Heart right ventricle (tissue), 16 donors: ENCODE measurements at regions of chr10 and their contacts with region 1.

Region 1: DNA sequence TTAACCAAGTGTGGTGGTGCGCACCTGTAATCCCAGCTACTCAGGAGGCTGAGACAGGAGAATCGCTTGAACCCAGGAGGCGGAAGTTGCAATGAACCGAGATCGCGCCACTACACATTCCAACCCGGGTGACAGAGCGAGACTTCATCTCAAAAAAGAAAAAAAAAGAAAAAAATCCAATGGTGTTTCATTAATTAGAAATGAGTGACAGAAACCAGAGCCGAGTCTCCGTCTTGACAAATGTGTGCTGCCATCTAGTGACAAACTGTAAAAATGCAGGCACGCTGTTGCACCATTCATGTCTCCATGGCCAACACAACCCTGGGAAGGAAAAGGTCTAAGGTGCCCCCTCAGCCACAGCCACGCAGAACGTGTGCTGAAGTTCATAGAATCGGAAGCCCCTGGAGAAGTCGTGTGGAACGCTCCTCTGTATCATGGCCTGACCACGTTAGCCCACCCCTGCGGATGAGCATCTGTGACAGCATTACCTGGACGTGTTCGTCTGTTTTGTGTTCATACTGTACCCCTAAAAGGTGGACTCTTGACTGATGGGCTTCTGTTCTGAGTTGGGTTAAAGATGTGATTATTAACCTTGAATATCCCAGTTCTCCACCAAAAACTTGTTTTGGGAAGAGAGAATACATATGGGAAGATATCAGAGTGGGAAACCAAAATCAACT is 94.9 kb downstream of the LYZL2 start:
- DNase-seq: peak; percentile 22 to 74
- ATAC-seq: peak; percentile 59 to 81 (median 70)
- H3K4me3 ChIP-seq: no peak overlapping the region
- H3K27ac ChIP-seq: peak overlapping the region in 1 of 10 donors; percentile 89
- H3K4me1 ChIP-seq: peaks cover 6 to 89% (median 19%) of the 10 kb centered on the region in 9 donors
- H3K27me3 ChIP-seq: no peaks in the 10 kb centered on the region
- CTCF ChIP-seq: peak; percentile 27 to 92 (median 88)

Region 2: GRCh38 chr10:30392564-30392990 is 142.0 kb before region 1 on chr10:
- intact Hi-C with region 1: loop called in 8 of 10 experiments (anchors 1 to 5 kb)
- DNase-seq: peak; percentile 66 to 67
- ATAC-seq: peak; percentile 94 to 99 (median 98)
- H3K4me3 ChIP-seq: peak overlapping the region in 3 of 10 donors; percentile 7 to 23 (median 19)
- H3K27ac ChIP-seq: no peak overlapping the region
- H3K4me1 ChIP-seq: peaks cover 0 to 20% (median 6%) of the 10 kb centered on the region in 9 donors
- H3K27me3 ChIP-seq: peaks cover 0 to 7% (median 0%) of the 10 kb centered on the region in 7 donors
- CTCF ChIP-seq: peak; percentile 85 to 97 (median 96)

Region 3: GRCh38 chr10:30398788-30399187 is 135.8 kb before region 1 on chr10:
- intact Hi-C with region 1: loop called in 4 of 10 experiments (anchors 5 kb)
- DNase-seq: no peak
- ATAC-seq: no peak
- H3K4me3 ChIP-seq: no peak overlapping the region
- H3K27ac ChIP-seq: no peak overlapping the region
- H3K4me1 ChIP-seq: peaks cover 0 to 12% (median 7%) of the 10 kb centered on the region in 9 donors
- H3K27me3 ChIP-seq: no peaks in the 10 kb centered on the region
- CTCF ChIP-seq: peak in 1 of 9 donors; percentile 6

Region 4: DNA sequence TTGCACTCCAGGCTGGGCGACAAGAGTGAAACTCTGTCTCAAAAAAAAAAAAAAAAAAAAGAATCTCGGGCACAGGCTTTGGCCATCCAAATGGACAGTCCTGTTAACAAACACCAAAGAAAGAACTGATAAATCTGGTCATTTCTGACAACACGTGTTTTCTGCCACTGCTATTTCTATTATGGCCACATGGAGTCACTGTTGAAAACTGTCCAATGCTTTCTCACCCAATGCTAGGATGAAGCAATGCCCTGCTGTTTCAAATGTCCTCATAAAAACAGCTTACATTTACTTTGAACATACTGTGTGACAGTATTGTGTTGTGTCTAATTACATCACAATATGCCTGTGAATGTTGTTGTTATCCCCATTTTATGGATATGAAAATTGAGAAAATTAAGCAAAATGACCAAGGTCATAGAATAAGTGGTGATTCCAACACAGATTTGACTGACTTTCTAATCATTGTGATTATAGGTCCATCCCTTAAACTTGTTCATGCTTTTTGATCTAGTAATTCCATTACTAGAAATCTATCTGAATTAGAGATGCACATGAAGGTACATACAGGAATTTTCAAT is 120.5 kb before region 1 on chr10:
- intact Hi-C with region 1: loop called (anchors 1 to 5 kb)
- DNase-seq: peak in 1 of 2 donors; percentile 57
- ATAC-seq: peak in 6 of 8 donors; percentile 67 to 79 (median 75)
- H3K4me3 ChIP-seq: no peak overlapping the region
- H3K27ac ChIP-seq: no peak overlapping the region
- H3K4me1 ChIP-seq: peaks cover 0 to 27% (median 7%) of the 10 kb centered on the region in 9 donors
- H3K27me3 ChIP-seq: no peaks in the 10 kb centered on the region
- CTCF ChIP-seq: peak; percentile 74 to 85 (median 76)

Region 5: DNA sequence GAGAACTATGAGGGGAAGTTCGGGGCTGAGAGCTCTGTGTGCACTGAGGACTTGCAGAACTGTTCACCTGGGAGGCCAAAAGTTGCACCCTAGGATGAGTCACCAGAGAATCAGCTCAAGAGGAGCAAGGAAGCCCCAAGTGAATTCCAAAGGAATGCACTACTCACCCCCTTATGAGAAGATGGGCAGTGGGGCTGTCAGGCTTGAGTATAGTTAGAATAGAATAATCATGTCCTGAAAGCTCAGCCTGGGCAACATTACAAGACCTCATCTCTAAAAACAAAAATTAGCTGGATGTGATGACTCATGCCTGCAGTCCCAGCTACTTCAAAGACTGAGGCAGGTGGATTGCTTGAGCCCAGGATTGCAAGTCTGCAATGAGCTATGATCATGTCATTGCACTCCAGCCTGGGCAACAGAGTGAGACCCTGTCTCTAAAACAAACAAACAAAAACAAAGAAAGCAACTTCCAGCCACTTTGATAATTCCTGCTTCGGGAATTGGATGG is 70.6 kb before region 1 on chr10:
- intact Hi-C with region 1: loop called in 1 of 10 experiments (anchors 5 kb)
- DNase-seq: no peak
- ATAC-seq: no peak
- H3K4me3 ChIP-seq: no peak overlapping the region
- H3K27ac ChIP-seq: no peak overlapping the region
- H3K4me1 ChIP-seq: peaks cover 0 to 33% (median 0%) of the 10 kb centered on the region in 9 donors
- H3K27me3 ChIP-seq: no peaks in the 10 kb centered on the region
- CTCF ChIP-seq: no peak

Region 6: DNA sequence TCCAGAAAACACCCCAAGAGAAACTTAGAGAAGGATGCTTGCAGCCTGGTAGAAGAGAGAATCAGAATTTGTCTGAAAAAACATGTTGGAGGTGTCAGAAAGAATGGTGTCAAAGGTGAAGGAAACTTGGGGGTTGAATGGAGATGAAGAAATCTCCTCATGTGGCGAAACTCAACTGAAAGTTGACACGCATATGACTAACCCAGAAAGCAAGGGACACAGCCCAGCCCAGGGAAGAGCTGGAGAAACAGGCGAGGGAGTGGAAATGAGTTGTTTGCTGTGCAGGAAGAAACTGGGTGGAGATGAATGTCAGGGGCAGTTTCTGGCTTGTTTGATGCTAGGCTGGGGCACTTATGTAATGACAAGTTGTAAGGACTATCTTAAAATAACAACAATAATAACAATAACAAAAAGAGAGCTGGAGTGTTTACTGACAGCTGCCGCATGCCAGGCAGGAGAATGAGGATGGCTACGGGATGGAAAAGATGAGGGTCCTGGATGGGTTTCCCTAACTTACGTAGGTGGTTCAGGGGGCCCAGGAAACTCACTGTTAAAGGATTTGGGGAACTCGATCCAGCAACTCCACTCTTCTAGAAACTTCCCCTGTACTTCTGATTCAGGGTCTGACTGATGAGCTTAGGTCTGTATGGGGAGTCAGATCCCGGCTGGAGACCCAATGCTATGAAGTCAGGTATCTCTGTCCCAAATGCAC is 43.2 kb before region 1 on chr10:
- intact Hi-C with region 1: no loop called
- DNase-seq: no peak
- ATAC-seq: peak in 1 of 8 donors; percentile 29
- H3K4me3 ChIP-seq: no peak overlapping the region
- H3K27ac ChIP-seq: peak overlapping the region in 1 of 10 donors; percentile 57
- H3K4me1 ChIP-seq: peaks cover 0 to 81% (median 0%) of the 10 kb centered on the region in 9 donors
- H3K27me3 ChIP-seq: peaks cover 0 to 27% (median 12%) of the 10 kb centered on the region in 7 donors
- CTCF ChIP-seq: no peak

Region 7: GRCh38 chr10:30583778-30584415 is 49.3 kb after region 1 on chr10:
- intact Hi-C with region 1: loop called in 6 of 10 experiments (anchors 5 to 10 kb)
- DNase-seq: peak; percentile 38 to 86
- ATAC-seq: peak; percentile 86 to 97 (median 93)
- H3K4me3 ChIP-seq: peak overlapping the region in 9 of 10 donors; percentile 6 to 46 (median 40)
- H3K27ac ChIP-seq: peak overlapping the region; percentile 64 to 90 (median 84)
- H3K4me1 ChIP-seq: peaks cover 0 to 44% (median 22%) of the 10 kb centered on the region in 9 donors
- H3K27me3 ChIP-seq: no peaks in the 10 kb centered on the region
- CTCF ChIP-seq: no peak